Body of pancreas (tissue), 4 donors: ENCODE measurements at regions of chr11 and their contacts with region 1.

Region 1: GRCh38 chr11:48109046-48109666 is 107.5 kb upstream of the OR4B1 start:
- DNase-seq: no peak
- ATAC-seq: peak; percentile 47
- H3K4me3 ChIP-seq: no peak overlapping the region
- H3K27ac ChIP-seq: peak overlapping the region in 3 of 4 donors; percentile 64 to 73 (median 71)
- H3K4me1 ChIP-seq: peaks cover 24% of the 10 kb centered on the region
- H3K27me3 ChIP-seq: no peaks in the 10 kb centered on the region
- CTCF ChIP-seq: peak in 6 of 7 experiments; percentile 15 to 50 (median 20)
- POLR2A ChIP-seq: no peak

Region 2: GRCh38 chr11:47899801-47900200 is 209.4 kb before region 1 on chr11:
- intact Hi-C with region 1: no loop called
- DNase-seq: no peak
- ATAC-seq: no peak
- H3K4me3 ChIP-seq: no peak overlapping the region
- H3K27ac ChIP-seq: no peak overlapping the region
- H3K4me1 ChIP-seq: no peaks in the 10 kb centered on the region
- H3K27me3 ChIP-seq: no peaks in the 10 kb centered on the region
- CTCF ChIP-seq: no peak
- POLR2A ChIP-seq: no peak

Region 3: GRCh38 chr11:47924184-47924691 is 184.9 kb before region 1 on chr11:
- intact Hi-C with region 1: no loop called
- DNase-seq: peak; percentile 91 to 97 (median 94)
- ATAC-seq: peak; percentile 98
- H3K4me3 ChIP-seq: no peak overlapping the region
- H3K27ac ChIP-seq: peak overlapping the region; percentile 85 to 92 (median 88)
- H3K4me1 ChIP-seq: peaks cover 20% of the 10 kb centered on the region
- H3K27me3 ChIP-seq: no peaks in the 10 kb centered on the region
- CTCF ChIP-seq: no peak
- POLR2A ChIP-seq: no peak

Region 4: GRCh38 chr11:47938791-47939560 is 170.2 kb before region 1 on chr11:
- intact Hi-C with region 1: loop called (anchors 5 kb)
- DNase-seq: no peak
- ATAC-seq: no peak
- H3K4me3 ChIP-seq: no peak overlapping the region
- H3K27ac ChIP-seq: no peak overlapping the region
- H3K4me1 ChIP-seq: no peaks in the 10 kb centered on the region
- H3K27me3 ChIP-seq: no peaks in the 10 kb centered on the region
- CTCF ChIP-seq: no peak
- POLR2A ChIP-seq: no peak

Region 5: DNA sequence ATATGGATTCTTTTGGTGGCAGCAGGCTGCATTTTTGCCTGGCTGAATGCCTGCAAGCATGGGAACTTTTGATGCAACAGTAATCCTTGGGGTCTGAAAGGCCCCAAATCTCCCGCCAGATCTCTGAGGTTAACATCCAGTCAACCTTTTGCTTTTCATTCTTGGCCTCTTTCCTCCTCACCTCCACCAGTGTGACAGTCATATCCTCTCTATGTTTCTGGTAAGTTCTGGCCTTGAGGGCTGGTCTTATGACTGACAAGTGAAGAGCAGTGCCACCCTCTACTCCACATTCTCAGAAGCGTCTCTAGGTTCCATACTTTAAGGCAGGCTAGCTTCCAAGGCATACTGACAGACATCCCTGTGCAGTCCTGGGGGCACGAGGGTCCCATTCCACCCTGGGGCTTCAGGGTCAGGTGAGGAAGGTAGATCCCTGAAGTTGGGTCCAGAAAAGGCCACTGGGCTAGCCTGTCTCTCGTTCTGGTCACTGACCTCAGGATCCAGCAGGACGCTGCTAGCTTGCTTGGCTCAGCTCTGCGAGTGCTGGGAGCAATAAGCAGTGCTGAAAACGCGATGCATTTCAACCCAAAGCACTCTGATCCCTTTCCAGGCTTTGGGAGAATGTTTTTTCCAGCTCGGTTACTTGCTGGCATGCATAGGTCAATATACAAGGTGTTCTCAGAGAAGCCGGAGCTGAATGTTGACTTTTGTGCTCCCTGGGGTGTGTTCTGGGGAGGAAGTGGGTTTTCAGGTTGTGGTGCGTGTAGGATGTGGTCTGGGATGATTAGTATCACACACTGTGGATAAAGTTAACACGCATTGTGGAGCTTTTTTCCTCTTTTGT is 53.6 kb before region 1 on chr11:
- intact Hi-C with region 1: no loop called
- DNase-seq: peak in 3 of 4 donors; percentile 25 to 54 (median 38)
- ATAC-seq: peak; percentile 45
- H3K4me3 ChIP-seq: no peak overlapping the region
- H3K27ac ChIP-seq: peak overlapping the region; percentile 15 to 67 (median 46)
- H3K4me1 ChIP-seq: peaks cover 31% of the 10 kb centered on the region
- H3K27me3 ChIP-seq: no peaks in the 10 kb centered on the region
- CTCF ChIP-seq: no peak
- POLR2A ChIP-seq: no peak

Region 6: DNA sequence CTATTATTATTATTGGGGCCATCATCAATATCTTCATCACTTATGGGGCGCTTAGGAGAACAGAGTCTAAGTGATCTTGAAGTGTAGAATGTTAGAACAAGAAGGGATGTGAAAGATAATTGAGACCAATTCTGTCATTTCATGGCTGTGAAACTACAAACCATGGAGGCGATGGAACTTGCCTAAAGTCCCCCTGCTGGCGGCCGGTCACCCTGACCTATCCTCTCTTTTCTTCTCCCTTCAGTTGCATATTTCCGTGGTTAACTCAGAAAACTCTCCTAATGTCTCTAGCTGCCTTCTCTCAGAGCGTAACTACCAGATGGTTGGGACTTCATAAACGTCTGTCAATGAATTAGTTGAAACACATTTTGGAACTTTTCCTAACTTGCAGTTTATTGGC is 100.9 kb after region 1 on chr11:
- intact Hi-C with region 1: no loop called
- DNase-seq: no peak
- ATAC-seq: no peak
- H3K4me3 ChIP-seq: no peak overlapping the region
- H3K27ac ChIP-seq: no peak overlapping the region
- H3K4me1 ChIP-seq: no peaks in the 10 kb centered on the region
- H3K27me3 ChIP-seq: no peaks in the 10 kb centered on the region
- CTCF ChIP-seq: no peak
- POLR2A ChIP-seq: no peak